ENCODE measurements at regions of chr12 and their contacts with region 1.

Region 1: DNA sequence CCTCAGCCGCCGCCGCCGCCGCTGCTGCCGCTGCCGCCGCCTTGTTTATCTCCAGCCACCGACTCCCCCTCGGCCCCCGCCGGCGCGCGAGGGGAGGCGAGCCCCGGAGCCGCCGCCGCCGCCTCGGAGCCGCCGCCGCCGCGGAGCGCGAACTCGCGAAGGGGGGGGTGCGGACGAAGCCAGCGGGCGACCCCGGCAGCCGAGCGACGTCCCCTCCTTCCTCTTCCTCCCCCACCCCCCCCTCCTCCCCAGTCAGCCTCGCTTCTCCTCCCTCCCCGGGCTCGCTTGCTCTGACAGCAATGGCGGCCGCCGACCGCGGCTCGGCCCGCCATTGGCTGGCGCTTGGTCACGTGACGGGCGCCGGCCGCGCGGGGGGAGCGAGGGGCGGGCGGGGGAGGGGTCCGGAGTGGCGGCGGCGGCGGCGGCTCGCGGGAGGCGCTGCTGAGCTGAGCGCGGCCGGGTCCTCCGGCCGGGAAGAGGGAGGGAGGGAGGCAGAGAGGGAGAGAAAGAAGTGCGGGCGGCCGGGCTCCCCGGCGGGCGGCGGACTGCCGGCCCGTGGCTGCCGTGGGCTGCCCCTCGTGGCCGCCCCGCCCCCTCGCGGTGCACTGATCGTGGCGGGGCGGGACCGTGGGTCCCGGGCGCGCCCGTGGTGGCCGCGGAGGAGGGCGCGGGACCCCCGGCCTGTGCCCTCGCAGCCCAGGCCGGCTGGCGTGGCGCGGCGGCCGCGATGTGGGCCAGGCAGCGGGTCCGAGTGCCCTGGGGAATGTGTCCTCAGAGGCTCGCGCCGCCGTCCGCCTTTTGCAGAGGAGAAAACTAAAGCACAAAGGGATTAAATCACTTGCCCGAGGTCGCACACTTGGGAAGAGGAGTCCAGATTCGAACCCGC is at the start of gene MED13L:
- DNase-seq: peak; percentile 85 to 96 (median 92)
- ATAC-seq: peak; percentile 91
- H3K4me3 ChIP-seq: peak within 1 kb of the TSS; percentile 82
- H3K4me3 Mint-ChIP-seq: peak within 1 kb of the TSS; percentile 92 to 99 (median 98)
- H3K27ac ChIP-seq: peak within 1 kb of the TSS; percentile 68
- H3K27ac Mint-ChIP-seq: peak within 1 kb of the TSS; percentile 92 to 97 (median 94)
- H3K4me1 ChIP-seq: peaks cover 13 to 20% of the 10 kb centered on the region in 2 donors
- H3K4me1 Mint-ChIP-seq: peaks cover 33 to 48% (median 38%) of the 10 kb centered on the region in 7 donors
- H3K27me3 ChIP-seq: no peaks in the 10 kb centered on the region
- H3K27me3 Mint-ChIP-seq: peaks cover 0 to 7% (median 0%) of the 10 kb centered on the region in 5 donors
- total RNA-seq, gene MED13L: 94.0 to 283 (median 180) TPM

Region 2: DNA sequence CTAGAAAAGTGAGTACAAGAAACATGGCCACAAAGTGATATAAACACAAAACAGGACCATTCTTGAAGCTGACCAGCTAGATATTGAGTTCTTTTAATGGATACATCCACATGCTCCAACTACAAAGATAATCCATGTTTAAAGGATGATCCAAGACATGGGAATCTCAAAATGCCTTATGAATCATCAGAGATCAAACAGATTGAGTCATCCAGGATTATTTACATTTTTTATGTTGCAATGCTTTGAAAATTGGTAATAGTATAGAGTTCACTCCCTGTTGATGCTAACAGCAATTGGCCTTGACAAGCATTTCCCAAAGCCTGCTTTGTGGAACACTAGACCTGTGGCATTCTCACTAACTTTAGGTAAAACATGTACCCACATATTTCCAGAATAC is 1300.7 kb before region 1 on chr12:
- CTCF ChIA-PET with region 1: no interaction called
- POLR2A ChIA-PET with region 1: no interaction called
- intact Hi-C with region 1: no loop called
- DNase-seq: no peak
- ATAC-seq: no peak
- H3K4me3 ChIP-seq: no peak overlapping the region
- H3K4me3 Mint-ChIP-seq: no peak overlapping the region
- H3K27ac ChIP-seq: no peak overlapping the region
- H3K27ac Mint-ChIP-seq: no peak overlapping the region
- H3K4me1 ChIP-seq: no peaks in the 10 kb centered on the region
- H3K4me1 Mint-ChIP-seq: no peaks in the 10 kb centered on the region
- H3K27me3 ChIP-seq: no peaks in the 10 kb centered on the region
- H3K27me3 Mint-ChIP-seq: peaks cover 0 to 7% (median 0%) of the 10 kb centered on the region in 5 donors

Region 3: DNA sequence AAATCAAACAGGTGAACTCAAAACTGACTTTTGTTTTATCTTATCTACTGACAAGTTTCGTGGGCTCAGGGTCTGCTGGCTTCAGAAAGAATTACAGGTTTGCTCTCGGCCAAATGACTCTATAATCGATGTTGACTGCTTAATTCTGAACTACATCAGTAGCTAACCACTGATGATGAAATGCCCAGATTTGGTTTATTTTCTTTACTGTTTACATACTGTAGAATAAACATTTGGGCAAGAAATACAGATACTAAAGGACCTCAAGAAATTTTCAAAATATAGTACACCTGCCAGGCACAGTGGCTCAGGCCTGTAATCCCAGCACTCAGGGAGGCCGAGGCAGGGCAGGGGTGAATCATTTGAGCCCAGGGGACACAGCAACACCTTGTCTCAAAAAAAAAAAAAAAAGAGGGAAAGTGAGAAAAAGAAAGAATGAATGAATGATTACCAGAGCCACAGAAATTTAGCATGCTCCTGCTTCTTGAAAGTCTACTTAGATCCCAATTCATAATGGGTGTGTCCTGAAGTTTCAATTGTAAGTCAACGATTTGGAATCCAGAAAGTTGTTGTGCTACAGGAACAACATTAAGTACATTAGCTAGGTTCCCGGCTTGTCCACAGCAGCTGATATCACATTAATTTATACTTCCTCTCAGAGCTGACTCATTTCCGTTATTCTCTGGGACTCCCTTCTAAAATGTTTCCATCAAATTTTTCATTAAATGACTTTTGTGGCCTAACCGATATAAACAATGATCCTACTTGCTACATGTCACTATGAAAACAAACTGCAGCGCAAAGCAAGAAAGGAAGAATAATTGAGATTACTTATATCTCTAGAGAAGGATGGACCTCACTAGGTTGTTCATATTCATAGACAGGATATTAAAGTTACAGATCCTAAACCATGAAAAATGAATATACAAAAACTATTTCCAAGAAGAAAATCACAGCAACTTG is 134.4 kb before region 1 on chr12:
- CTCF ChIA-PET with region 1: no interaction called
- POLR2A ChIA-PET with region 1: interaction called, 4 read pairs
- intact Hi-C with region 1: loop called (anchors 2 kb)
- DNase-seq: no peak
- ATAC-seq: peak; percentile 63
- H3K4me3 ChIP-seq: no peak overlapping the region
- H3K4me3 Mint-ChIP-seq: peak overlapping the region in 7 of 10 donors; percentile 15 to 72 (median 51)
- H3K27ac ChIP-seq: no peak overlapping the region
- H3K27ac Mint-ChIP-seq: peak overlapping the region in 5 of 9 donors; percentile 1 to 45 (median 7)
- H3K4me1 ChIP-seq: peaks cover 11 to 21% of the 10 kb centered on the region in 2 donors
- H3K4me1 Mint-ChIP-seq: peaks cover 42 to 61% (median 52%) of the 10 kb centered on the region in 7 donors
- H3K27me3 ChIP-seq: no peaks in the 10 kb centered on the region
- H3K27me3 Mint-ChIP-seq: no peaks in the 10 kb centered on the region

Region 4: GRCh38 chr12:116263844-116264243 is 13.8 kb before region 1 on chr12:
- CTCF ChIA-PET with region 1: interaction called, 3 read pairs
- POLR2A ChIA-PET with region 1: interaction called, 5 read pairs
- intact Hi-C with region 1: loop called in 1 of 2 experiments (anchors 1 kb)
- DNase-seq: no peak
- ATAC-seq: no peak
- H3K4me3 ChIP-seq: no peak overlapping the region
- H3K4me3 Mint-ChIP-seq: peak overlapping the region in 4 of 10 donors; percentile 1 to 40 (median 19)
- H3K27ac ChIP-seq: peak overlapping the region; percentile 6
- H3K27ac Mint-ChIP-seq: peak overlapping the region in 5 of 9 donors; percentile 21 to 50 (median 25)
- H3K4me1 ChIP-seq: peaks cover 22 to 46% of the 10 kb centered on the region in 2 donors
- H3K4me1 Mint-ChIP-seq: peaks cover 0 to 49% (median 30%) of the 10 kb centered on the region in 7 donors
- H3K27me3 ChIP-seq: no peaks in the 10 kb centered on the region
- H3K27me3 Mint-ChIP-seq: no peaks in the 10 kb centered on the region

Region 5: DNA sequence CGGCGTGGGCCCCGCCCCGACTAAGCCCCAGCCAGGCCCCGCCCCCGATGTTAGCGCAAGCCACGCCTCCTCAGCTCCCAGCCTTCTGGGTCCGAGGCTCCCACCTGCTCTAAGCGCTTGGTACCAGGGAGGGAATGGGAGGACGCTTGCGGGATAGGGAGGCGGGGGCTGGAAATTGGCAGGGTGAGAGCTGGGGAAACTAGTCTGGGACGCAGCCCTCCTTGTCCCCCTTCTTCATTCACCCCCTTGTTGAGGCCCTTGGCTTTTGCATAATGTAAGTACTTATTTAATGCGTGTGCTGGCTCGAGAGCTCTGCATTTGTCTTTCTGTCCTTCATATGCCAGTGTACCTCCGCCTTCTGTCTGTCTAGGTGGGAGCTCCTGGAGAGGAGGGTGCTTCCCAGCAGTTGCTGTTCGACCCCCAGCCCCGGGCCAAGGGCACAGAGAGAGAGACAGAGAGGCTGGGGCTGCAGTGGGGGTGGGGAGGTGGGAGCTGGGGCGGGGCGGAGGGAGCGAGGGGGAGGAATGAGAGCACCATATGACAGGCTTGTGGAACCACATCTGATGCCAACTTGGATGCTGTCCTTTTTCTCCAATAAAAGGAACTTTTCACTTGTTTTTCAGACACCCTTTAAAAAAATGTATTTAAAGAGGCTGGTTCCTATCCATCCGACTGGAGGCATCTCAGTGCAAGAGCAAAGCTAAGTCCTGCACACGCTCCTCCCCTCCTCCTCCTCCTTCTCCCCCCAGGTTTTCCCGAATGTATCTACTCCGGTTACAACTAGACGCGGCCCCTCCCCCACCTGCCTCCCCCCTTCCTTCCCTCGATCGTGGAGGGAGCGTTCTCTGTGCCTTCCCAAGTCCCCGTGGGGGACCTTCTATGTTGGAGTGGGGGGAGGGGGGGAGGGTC is 256.0 kb after region 1 on chr12:
- CTCF ChIA-PET with region 1: no interaction called
- POLR2A ChIA-PET with region 1: no interaction called
- intact Hi-C with region 1: loop called (anchors 1 kb)
- DNase-seq: peak; percentile 47 to 79 (median 69)
- ATAC-seq: peak; percentile 95
- H3K4me3 ChIP-seq: peak overlapping the region; percentile 84
- H3K4me3 Mint-ChIP-seq: peak overlapping the region; percentile 82 to 97 (median 88)
- H3K27ac ChIP-seq: peak overlapping the region; percentile 47
- H3K27ac Mint-ChIP-seq: peak overlapping the region in 8 of 9 donors; percentile 22 to 82 (median 70)
- H3K4me1 ChIP-seq: peaks cover 6 to 9% of the 10 kb centered on the region in 2 donors
- H3K4me1 Mint-ChIP-seq: peaks cover 20 to 40% (median 28%) of the 10 kb centered on the region in 7 donors
- H3K27me3 ChIP-seq: no peaks in the 10 kb centered on the region
- H3K27me3 Mint-ChIP-seq: peaks cover 0 to 14% (median 0%) of the 10 kb centered on the region in 5 donors

Region 6: DNA sequence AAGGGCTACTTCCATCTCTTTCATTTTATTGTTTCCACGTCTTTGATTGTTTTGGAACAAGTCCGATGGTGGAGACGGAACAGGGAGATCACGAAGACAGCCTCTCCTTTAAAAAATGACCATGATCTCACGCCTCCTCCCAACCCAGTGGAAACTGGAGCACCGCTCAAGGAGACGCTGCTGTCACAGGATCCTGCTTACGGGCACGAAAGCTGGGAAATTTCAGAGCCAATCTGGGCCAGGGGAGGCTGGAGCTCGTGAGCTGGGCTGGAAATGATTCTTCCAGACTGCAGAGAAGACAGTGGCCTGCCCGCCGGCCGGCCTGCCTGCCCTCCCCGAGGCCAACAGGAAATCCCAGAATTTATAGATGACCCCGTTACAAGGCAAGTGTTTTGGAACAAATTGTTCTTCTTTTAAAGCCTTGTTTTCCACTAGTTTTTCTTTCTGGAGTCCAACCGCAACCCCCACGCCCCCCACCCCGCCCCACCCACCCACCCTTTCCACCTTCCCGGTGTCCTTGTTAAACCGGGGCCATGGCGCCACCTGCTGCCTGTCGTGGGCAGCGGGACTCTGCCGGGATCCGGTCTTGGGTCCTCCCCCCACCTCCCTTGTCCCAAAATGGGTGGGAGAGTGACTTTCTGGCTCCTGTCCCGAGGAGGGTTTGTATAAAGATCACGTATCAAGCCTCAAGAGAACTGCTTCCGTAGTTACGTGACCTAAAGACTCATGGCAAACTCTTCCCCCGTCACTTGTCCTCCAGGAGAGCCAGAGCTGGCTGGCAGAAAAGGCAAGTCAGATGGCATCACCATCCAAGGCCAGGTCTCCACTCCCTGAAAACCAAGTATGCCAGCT is 321.9 kb after region 1 on chr12:
- CTCF ChIA-PET with region 1: no interaction called
- POLR2A ChIA-PET with region 1: interaction called, 3 read pairs
- intact Hi-C with region 1: loop called (anchors 1 kb)
- DNase-seq: peak; percentile 23 to 61 (median 39)
- ATAC-seq: peak; percentile 79
- H3K4me3 ChIP-seq: no peak overlapping the region
- H3K4me3 Mint-ChIP-seq: peak overlapping the region in 4 of 10 donors; percentile 12 to 36 (median 22)
- H3K27ac ChIP-seq: no peak overlapping the region
- H3K27ac Mint-ChIP-seq: peak overlapping the region in 1 of 9 donors; percentile 67
- H3K4me1 ChIP-seq: peaks cover 2 to 17% of the 10 kb centered on the region in 2 donors
- H3K4me1 Mint-ChIP-seq: peaks cover 16 to 48% (median 29%) of the 10 kb centered on the region in 7 donors
- H3K27me3 ChIP-seq: no peaks in the 10 kb centered on the region
- H3K27me3 Mint-ChIP-seq: peaks cover 0 to 5% (median 0%) of the 10 kb centered on the region in 5 donors

Region 7: DNA sequence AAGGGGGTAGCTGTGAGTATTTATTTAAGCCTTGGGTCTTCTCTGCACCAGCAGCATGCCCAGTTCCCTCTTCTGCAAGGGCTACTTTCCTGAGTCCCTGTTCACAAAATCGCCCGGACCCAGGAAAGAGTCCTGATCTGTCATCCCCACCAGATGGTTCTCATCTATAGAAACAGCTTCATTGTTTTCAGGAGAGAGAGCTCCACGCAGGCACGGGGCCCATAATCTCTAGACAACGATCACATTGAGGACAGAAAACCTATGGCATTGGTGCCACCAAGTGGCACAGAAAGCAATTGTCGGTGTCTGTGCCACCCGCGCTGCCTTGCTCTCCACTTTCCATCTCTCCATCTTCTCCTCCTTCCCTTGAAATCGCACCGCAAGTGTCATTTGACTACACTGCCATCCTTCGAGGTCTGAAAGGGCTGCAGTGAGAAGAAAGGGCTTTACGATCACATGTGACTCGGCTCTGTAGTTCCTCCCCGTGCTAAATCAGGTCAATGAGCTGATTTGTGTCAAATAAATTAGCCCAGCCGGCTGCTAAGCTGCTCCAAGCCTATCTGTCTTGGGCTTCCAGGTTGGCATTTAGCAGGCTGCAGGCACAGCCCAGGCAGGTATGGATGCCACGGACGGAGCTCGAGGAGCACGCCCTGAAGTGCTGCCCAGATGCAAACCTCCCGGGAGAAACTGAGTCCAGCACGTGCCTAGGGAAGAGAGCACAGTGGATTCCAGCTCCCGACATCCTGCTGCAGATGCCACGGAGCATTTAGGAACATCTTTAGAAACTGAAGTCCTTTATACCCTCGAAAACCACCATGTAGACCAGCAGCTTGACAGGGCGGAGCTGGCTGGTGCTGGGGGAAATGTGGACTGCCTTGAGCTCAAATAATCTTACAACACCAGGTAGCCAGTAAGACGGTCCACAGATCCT is 431.5 kb after region 1 on chr12:
- CTCF ChIA-PET with region 1: no interaction called
- POLR2A ChIA-PET with region 1: no interaction called
- intact Hi-C with region 1: loop called in 1 of 2 experiments (anchors 2 kb)
- DNase-seq: peak; percentile 23 to 63 (median 50)
- ATAC-seq: peak; percentile 88
- H3K4me3 ChIP-seq: no peak overlapping the region
- H3K4me3 Mint-ChIP-seq: peak overlapping the region in 9 of 10 donors; percentile 30 to 81 (median 63)
- H3K27ac ChIP-seq: no peak overlapping the region
- H3K27ac Mint-ChIP-seq: peak overlapping the region in 3 of 9 donors; percentile 35 to 68 (median 57)
- H3K4me1 ChIP-seq: peaks cover 0 to 9% of the 10 kb centered on the region in 2 donors
- H3K4me1 Mint-ChIP-seq: peaks cover 7 to 11% (median 9%) of the 10 kb centered on the region in 7 donors
- H3K27me3 ChIP-seq: no peaks in the 10 kb centered on the region
- H3K27me3 Mint-ChIP-seq: peaks cover 0 to 30% (median 6%) of the 10 kb centered on the region in 5 donors

Region 8: GRCh38 chr12:118061011-118061875 is 1783.6 kb after region 1 on chr12 and contains the start of gene WSB2:
- CTCF ChIA-PET with region 1: no interaction called
- POLR2A ChIA-PET with region 1: no interaction called
- intact Hi-C with region 1: loop called in 1 of 2 experiments (anchors 2 kb)
- DNase-seq: peak; percentile 24 to 81 (median 39)
- ATAC-seq: peak; percentile 53
- H3K4me3 ChIP-seq: peak within 1 kb of the TSS; percentile 88
- H3K4me3 Mint-ChIP-seq: peak within 1 kb of the TSS; percentile 88 to 100 (median 96)
- H3K27ac ChIP-seq: peak within 1 kb of the TSS; percentile 80
- H3K27ac Mint-ChIP-seq: peak within 1 kb of the TSS; percentile 92 to 98 (median 94)
- H3K4me1 ChIP-seq: peaks cover 13 to 32% of the 10 kb centered on the region in 2 donors
- H3K4me1 Mint-ChIP-seq: peaks cover 44 to 65% (median 57%) of the 10 kb centered on the region in 7 donors
- H3K27me3 ChIP-seq: no peaks in the 10 kb centered on the region
- H3K27me3 Mint-ChIP-seq: no peaks in the 10 kb centered on the region
- total RNA-seq, gene WSB2: 12.2 to 52.2 (median 19.1) TPM

Measured in naive thymus-derived CD4-positive, alpha-beta T cell (primary cell).